BJ (cell line): ENCODE measurements at regions of chr7 and their contacts with region 1.

Region 1: GRCh38 chr7:77759294-77759889 is 38.8 kb downstream of the TMEM60 start:
- DNase-seq: no peak
- H3K4me3 ChIP-seq: no peak overlapping the region
- H3K27me3 ChIP-seq: no peaks in the 10 kb centered on the region
- CTCF ChIP-seq: peak; percentile 67

Region 2: GRCh38 chr7:77651573-77652162 is 107.7 kb before region 1 on chr7:
- CTCF ChIA-PET with region 1: interaction called, 26 read pairs
- POLR2A ChIA-PET with region 1: no interaction called
- DNase-seq: no peak
- H3K4me3 ChIP-seq: no peak overlapping the region
- H3K27me3 ChIP-seq: no peaks in the 10 kb centered on the region
- CTCF ChIP-seq: peak; percentile 72

Region 3: DNA sequence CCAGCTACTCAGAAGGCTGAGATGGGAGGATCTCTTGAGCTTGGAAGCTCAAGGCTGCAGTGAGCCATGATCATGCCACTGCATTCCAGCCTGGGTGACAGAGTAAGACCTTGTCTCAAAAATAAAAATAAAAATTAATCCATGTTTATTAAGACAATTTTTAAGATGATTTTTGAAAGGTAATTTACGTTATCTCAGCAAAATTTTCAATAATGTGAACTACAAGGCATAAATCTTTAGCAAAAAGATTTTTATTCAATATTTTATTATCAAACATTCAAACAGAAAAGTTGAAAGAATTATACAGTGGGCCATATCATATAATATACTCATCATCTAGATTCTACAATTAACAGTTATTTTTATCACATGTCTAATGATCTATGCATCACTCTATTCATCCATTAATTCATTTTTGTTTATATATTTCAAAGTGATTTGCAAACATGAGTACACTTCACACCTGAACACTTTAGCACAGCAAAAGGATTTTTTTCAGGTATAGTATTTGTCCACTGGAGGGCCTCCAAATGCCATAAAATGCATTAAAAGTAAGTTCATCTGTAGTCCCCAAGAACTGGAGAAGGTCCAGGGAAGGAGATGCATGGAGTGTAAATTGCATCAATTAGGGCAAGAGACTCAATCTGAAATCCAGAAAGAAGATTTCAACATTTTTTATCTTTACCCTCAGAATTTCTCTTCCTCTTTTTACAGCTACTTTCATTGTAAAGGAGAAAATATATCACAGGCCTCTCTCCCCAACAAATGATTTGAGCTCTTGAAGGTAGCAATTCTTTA is 101.8 kb before region 1 on chr7:
- CTCF ChIA-PET with region 1: interaction called, 26 read pairs
- POLR2A ChIA-PET with region 1: no interaction called
- DNase-seq: no peak
- H3K4me3 ChIP-seq: no peak overlapping the region
- H3K27me3 ChIP-seq: no peaks in the 10 kb centered on the region
- CTCF ChIP-seq: peak; percentile 37

Region 4: DNA sequence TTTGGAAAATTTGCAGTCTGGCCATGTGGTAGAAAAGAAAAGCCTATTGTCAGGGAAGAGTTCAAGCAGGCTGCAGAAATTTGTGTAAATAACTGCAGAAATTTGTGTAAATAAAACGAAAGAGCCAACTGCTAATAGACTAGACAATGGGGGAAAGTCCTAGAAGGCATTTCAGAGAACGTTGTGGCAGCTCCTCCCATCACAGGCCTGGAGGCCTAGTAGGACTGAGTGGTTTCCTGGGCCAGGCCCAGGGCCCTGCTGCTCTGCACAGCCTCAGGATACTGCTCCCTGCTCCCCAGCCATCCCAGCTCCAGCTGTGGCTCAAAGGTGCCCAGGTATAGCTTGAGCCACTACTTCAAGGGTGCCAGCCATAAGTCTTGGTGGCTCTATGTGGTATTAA is 12.2 kb before region 1 on chr7:
- CTCF ChIA-PET with region 1: interaction called, 11 read pairs
- POLR2A ChIA-PET with region 1: no interaction called
- DNase-seq: no peak
- H3K4me3 ChIP-seq: no peak overlapping the region
- H3K27me3 ChIP-seq: no peaks in the 10 kb centered on the region
- CTCF ChIP-seq: no peak